Endothelial cell of umbilical vein (primary cell): ENCODE measurements at regions of chr1 and their contacts with region 1.

Region 1: GRCh38 chr1:37692078-37692833 is at the start of gene CDCA8:
- DNase-seq: peak; percentile 99
- H3K4me3 ChIP-seq: peak within 1 kb of the TSS; percentile 88 to 96 (median 88)
- H3K27ac ChIP-seq: peak within 1 kb of the TSS; percentile 28
- H3K4me1 ChIP-seq: peaks cover 29% of the 10 kb centered on the region
- H3K27me3 ChIP-seq: no peaks in the 10 kb centered on the region
- CTCF ChIP-seq: peak; percentile 73 to 94
- POLR2A ChIP-seq: peak; percentile 58
- total RNA-seq, gene CDCA8: 43.7 and 45.7 TPM in 2 replicates

Region 2: DNA sequence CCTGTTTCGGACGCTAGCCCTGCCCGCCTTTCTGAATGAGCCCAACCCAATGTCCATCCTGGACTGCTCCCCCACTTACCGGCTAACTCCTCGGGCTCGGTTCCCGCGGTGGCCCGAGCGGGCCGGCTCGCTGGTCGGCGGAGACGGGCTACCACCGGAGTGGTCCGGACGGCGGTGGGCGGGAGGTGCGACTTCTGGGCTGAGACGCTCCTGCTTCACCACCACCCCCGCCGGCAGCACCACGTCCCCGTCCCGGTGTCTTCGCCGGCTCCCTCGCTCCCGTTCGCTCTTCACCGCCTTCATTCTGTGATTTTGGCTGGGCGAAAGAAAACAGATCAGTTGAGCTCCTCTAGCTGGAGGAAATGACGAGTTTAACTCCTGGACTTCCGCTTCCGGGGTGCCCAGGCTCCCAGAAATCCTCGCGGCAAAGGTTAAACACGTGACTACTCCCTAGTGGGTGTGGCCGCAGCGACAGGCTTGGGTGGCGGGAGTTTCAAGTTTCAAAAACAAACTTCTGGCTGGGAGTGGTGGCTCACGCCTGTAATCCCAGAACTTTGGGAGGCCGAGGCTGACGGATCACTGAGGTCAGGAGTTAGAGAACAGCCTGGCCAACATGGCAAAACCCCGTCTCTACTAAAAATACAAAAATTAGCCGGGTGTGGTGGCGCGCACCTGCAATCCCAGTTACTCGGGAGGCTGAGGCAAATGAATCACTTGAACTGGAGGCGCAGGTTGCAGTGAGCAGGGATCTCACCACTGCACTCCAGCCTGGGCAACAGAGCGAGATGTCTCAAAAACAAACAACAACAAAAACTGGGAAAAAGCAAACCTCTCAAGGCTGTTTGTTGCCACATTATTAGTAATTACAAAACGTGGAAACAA is 138.1 kb before region 1 on chr1 and contains the start of gene SNIP1:
- CTCF ChIA-PET with region 1: interaction called, 4 read pairs
- POLR2A ChIA-PET with region 1: interaction called, 3 read pairs
- dilution Hi-C with region 1: no loop called
- intact Hi-C with region 1: loop called (anchors 2 kb)
- DNase-seq: peak; percentile 93
- H3K4me3 ChIP-seq: peak within 1 kb of the TSS; percentile 88 to 94 (median 88)
- H3K27ac ChIP-seq: peak within 1 kb of the TSS; percentile 76
- H3K4me1 ChIP-seq: peaks cover 14% of the 10 kb centered on the region
- H3K27me3 ChIP-seq: no peaks in the 10 kb centered on the region
- CTCF ChIP-seq: no peak
- POLR2A ChIP-seq: peak; percentile 56
- total RNA-seq, gene SNIP1: 18.4 and 19.6 TPM in 2 replicates

Region 3: DNA sequence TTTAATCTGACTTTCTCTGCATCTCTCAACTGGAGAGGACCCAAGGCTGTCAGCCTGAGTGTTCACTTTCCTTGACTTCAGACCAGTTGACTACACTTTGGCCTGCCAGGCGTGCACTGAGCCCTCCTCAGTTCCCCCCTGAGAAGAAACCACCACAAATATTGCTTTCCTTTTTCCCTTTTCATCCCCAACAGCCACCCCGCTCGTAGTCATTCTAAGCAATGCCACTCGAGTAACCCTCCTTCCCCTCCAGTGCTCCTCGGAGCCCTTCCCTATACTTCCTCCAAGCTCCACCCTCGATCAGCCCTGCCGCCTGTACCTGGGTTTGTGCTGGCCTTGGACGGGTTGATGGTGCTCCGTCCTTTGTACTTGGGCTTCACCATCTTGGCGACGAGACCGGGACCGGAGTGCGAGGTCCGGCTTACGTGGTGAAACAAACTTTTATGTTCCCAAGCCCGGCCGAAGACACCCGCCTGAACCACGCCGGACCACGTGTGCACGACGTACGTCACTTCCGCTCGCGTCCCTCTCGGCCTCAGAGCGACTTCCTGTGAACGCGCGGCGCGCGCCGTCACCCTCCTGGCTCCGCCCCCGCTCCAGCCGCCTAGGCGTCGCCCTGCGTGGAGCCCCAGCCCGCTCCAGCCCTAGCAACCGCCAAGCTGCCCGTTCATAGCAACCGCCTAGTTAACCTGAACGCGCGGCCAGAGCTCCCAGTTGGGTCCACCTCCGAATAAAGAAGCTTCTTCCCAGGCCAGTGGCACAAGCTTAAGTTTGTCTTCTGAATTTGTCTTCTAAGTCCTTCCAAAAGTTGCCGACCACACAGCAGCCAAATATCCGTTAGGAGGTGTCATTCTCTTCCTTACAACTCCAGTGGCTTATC is 96.6 kb before region 1 on chr1 and contains the start of gene GNL2:
- CTCF ChIA-PET with region 1: interaction called, 5 read pairs
- POLR2A ChIA-PET with region 1: interaction called, 5 read pairs
- dilution Hi-C with region 1: no loop called
- intact Hi-C with region 1: loop called (anchors 2 kb)
- DNase-seq: peak; percentile 97
- H3K4me3 ChIP-seq: peak within 1 kb of the TSS; percentile 54 to 89 (median 75)
- H3K27ac ChIP-seq: peak within 1 kb of the TSS; percentile 76
- H3K4me1 ChIP-seq: peaks cover 17% of the 10 kb centered on the region
- H3K27me3 ChIP-seq: peaks cover 0 to 6% of the 10 kb centered on the region in 2 experiments
- CTCF ChIP-seq: no peak
- POLR2A ChIP-seq: peak; percentile 87
- total RNA-seq, gene GNL2: 55.5 and 57.1 TPM in 2 replicates

Region 4: DNA sequence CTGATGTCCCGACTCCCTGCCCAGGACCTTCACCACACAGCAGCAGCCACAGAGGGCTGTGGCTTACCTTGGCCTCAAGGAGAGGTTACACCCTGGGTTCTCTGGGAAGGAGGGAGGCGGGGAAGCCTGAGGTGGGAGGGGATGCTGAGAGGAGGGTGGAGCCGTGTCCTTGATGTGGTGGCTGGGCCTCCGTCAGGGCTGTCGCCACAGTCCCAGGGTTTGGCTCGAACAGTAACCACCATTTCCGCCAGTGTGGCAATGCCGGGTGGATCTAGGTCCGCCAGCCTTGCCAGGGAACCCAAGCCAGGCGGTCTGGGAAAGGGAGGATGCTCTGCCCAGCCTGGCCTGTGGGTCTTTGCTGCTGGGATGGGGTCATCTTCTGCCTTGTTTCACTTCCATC is 18.3 kb before region 1 on chr1:
- CTCF ChIA-PET with region 1: no interaction called
- POLR2A ChIA-PET with region 1: no interaction called
- dilution Hi-C with region 1: no loop called
- intact Hi-C with region 1: no loop called
- DNase-seq: no peak
- H3K4me3 ChIP-seq: no peak overlapping the region
- H3K27ac ChIP-seq: no peak overlapping the region
- H3K4me1 ChIP-seq: no peaks in the 10 kb centered on the region
- H3K27me3 ChIP-seq: peaks cover 4 to 6% of the 10 kb centered on the region in 2 experiments
- CTCF ChIP-seq: no peak
- POLR2A ChIP-seq: no peak

Region 5: GRCh38 chr1:37807555-37808368 is 115.5 kb after region 1 on chr1 and contains the starts of genes C1orf122 and YRDC:
- CTCF ChIA-PET with region 1: no interaction called
- POLR2A ChIA-PET with region 1: no interaction called
- dilution Hi-C with region 1: no loop called
- intact Hi-C with region 1: loop called (anchors 1 kb)
- DNase-seq: peak; percentile 93
- H3K4me3 ChIP-seq: peak within 1 kb of the TSS; percentile 66 to 93 (median 83)
- H3K27ac ChIP-seq: peak within 1 kb of the TSS; percentile 91
- H3K4me1 ChIP-seq: peaks cover 13% of the 10 kb centered on the region
- H3K27me3 ChIP-seq: no peaks in the 10 kb centered on the region
- CTCF ChIP-seq: no peak
- POLR2A ChIP-seq: no peak
- total RNA-seq, gene C1orf122: 32.8 and 36.5 TPM in 2 replicates
- total RNA-seq, gene YRDC: 19.2 and 20.4 TPM in 2 replicates

Region 6: GRCh38 chr1:37931361-37932158 is 239.3 kb after region 1 on chr1:
- CTCF ChIA-PET with region 1: no interaction called
- POLR2A ChIA-PET with region 1: no interaction called
- dilution Hi-C with region 1: no loop called
- intact Hi-C with region 1: loop called (anchors 5 kb)
- DNase-seq: peak; percentile 98
- H3K4me3 ChIP-seq: peak overlapping the region; percentile 72 to 78 (median 74)
- H3K27ac ChIP-seq: peak overlapping the region; percentile 29
- H3K4me1 ChIP-seq: peaks cover 10% of the 10 kb centered on the region
- H3K27me3 ChIP-seq: no peaks in the 10 kb centered on the region
- CTCF ChIP-seq: no peak
- POLR2A ChIP-seq: no peak